Motor neuron (in vitro differentiated cells): ENCODE measurements at regions of chr19 and their contacts with region 1.

Region 1: DNA sequence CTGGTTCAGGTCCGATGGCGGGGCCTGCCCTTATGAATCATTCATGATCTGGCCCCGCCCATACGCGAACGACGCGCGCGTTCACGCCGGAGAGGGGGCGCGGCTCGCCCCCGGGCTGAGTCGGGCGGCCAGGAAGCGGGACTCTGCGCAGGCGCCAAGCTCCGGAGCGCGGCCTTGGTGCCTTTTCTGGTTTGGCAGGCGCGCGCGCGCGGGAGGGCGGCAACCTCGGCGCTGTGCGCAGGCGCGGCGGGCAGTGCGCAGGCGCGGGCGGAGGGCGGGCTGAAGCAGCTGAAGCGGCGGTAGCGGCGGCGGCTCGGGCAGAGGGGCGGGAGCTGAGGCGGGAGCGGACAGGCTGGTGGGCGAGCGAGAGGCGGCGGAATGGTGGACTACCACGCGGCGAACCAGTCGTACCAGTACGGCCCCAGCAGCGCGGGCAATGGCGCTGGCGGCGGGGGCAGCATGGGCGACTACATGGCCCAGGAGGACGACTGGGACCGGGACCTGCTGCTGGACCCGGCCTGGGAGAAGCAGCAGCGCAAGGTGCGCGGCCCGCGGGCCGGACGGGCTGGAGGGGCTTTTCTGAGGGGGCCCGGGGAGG is at the start of gene ACTN4:
- ATAC-seq: peak; percentile 76 to 91 (median 88)
- H3K4me3 ChIP-seq: peak within 1 kb of the TSS; percentile 60 to 78 (median 74)
- H3K27ac ChIP-seq: peak within 1 kb of the TSS; percentile 37 to 62
- H3K4me1 ChIP-seq: peaks cover 11 to 12% of the 10 kb centered on the region in 2 donors
- total RNA-seq, gene ACTN4: 31.6 to 251 (median 83.9) TPM

Region 2: DNA sequence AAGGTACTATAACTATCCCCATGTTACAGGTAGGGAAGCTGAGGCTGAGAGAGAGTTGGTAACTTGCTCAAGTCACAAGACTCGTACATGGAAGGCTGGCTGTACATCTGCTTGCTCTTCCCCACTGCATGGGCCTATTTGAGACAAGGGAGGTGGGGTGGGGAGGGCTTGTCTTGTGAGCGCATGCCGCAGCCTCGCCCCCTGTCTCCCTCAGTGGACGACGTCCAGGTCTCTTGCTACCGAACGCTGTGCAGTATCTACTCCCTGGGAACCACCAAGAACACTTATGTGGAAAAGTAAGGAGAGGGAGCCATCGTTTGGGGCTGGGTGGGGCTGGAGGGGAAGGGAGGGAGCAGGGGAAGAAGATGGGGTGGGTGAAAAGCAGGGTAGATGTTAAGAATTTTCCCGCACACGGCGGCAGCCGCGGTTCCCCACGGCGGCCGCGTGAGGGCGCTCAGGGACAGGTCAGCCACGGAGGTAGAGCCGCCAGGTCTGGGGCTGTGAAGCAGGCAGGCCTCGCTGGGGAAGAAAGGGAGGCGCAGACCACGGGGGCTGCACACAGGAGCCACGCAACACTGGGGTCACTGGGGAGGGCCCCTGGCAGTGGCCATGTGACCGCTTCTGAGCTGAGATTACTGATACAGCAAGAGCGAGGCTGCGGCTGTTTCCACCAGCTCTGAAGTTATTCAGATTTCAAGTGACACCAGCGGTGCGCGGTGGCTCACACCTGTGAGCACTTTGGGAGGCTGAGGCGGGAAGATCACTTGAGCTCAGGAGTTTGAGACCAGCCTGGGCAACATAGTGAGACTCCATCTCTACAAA is 132.4 kb before region 1 on chr19:
- in situ Hi-C with region 1: loop called in 1 of 9 experiments (anchors 25 kb)
- ATAC-seq: peak; percentile 94 to 99 (median 98)
- H3K4me3 ChIP-seq: no peak overlapping the region
- H3K27ac ChIP-seq: no peak overlapping the region
- H3K4me1 ChIP-seq: peaks cover 0 to 6% of the 10 kb centered on the region in 2 donors